ENCODE measurements at regions of chr13 and their contacts with region 1.

Region 1: DNA sequence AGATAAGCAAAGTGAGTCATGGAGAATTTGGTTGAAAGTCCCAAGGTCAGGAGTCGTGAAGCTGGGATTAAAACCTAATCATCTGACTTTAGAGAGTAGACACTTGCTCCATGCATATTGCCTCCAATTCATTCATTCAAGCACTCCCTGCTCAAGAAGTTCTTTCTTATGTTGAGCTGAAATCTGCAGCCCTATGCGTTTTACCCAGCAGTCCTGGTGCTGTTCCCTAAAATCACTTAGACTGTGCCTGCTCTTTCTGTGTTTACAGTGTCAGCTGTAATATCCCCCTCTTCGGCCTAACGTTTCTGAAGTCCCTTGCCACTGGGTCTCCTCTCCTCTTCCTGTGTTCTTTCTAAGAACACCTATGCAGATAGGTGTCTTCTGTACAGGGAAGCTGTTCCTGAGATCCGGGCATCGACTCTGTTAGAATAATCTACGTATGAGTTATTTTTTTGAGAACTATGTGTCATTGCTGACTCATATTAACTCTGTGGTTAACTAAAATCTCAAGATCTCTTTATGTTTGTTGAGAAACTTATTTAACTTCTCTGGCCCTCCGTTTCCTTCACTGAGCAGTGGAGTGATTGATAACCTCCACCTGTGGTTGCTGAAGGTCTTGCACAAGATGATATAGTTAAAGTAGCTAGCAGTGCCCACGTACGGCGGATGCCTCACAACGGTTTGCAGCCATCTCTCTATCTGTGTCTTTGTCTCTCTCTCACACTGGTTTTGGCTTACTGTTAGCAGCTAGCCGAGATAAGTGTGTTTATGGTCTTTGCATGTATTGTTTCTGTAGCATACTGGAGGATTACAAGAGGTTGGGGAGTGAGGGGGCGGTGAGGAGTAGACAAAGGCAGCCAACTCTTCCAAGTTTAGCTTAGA is 4.7 kb downstream of the ALOX5AP start:
- DNase-seq: peak; percentile 80
- H3K4me3 Mint-ChIP-seq: peak overlapping the region; percentile 73
- H3K27ac Mint-ChIP-seq: peak overlapping the region; percentile 88
- H3K4me1 Mint-ChIP-seq: peaks cover 78% of the 10 kb centered on the region
- H3K27me3 Mint-ChIP-seq: peaks cover 2% of the 10 kb centered on the region

Region 2: GRCh38 chr13:29384871-29385270 is 1355.1 kb before region 1 on chr13:
- CTCF ChIA-PET with region 1: no interaction called
- intact Hi-C with region 1: no loop called
- DNase-seq: no peak
- H3K4me3 Mint-ChIP-seq: no peak overlapping the region
- H3K27ac Mint-ChIP-seq: no peak overlapping the region
- H3K4me1 Mint-ChIP-seq: no peaks in the 10 kb centered on the region
- H3K27me3 Mint-ChIP-seq: peaks cover 3% of the 10 kb centered on the region

Region 3: DNA sequence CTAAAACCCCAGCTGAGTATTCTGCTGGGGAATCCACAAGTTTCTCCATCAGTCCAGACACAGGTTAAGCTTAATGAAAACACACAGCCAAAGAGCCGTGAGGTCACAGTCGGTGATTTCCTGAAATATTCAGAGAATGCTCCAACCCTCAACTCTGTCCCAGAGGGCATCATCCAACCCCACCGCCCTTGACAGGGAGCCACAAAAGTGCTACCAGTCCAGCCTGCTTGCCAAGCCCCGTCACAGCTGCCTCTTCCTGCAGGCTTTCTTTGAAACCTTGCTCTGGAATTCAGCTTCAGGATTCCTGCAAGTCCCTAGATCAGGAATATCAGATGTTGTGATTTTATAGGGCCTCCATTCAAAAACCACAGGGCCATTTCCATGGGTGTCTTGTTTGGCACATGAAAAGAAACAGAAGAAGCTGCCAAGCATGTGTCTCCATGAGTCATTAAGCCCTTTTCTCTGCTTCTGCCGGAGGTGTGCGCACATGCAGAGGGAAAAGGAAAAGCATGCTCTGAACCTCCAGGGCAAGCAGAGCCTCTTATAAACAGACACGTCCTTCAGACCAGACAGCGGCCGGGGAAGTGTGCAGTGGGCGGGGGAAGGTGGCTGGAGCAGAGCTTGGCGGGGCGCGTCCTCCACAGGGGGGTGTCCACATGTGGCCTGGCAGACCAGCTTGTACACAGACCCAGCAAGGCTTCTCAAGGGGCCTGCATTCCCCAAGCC is 597.4 kb before region 1 on chr13:
- CTCF ChIA-PET with region 1: no interaction called
- intact Hi-C with region 1: loop called (anchors 2 kb)
- DNase-seq: peak; percentile 63
- H3K4me3 Mint-ChIP-seq: no peak overlapping the region
- H3K27ac Mint-ChIP-seq: peak overlapping the region; percentile 37
- H3K4me1 Mint-ChIP-seq: peaks cover 55% of the 10 kb centered on the region
- H3K27me3 Mint-ChIP-seq: no peaks in the 10 kb centered on the region

Region 4: DNA sequence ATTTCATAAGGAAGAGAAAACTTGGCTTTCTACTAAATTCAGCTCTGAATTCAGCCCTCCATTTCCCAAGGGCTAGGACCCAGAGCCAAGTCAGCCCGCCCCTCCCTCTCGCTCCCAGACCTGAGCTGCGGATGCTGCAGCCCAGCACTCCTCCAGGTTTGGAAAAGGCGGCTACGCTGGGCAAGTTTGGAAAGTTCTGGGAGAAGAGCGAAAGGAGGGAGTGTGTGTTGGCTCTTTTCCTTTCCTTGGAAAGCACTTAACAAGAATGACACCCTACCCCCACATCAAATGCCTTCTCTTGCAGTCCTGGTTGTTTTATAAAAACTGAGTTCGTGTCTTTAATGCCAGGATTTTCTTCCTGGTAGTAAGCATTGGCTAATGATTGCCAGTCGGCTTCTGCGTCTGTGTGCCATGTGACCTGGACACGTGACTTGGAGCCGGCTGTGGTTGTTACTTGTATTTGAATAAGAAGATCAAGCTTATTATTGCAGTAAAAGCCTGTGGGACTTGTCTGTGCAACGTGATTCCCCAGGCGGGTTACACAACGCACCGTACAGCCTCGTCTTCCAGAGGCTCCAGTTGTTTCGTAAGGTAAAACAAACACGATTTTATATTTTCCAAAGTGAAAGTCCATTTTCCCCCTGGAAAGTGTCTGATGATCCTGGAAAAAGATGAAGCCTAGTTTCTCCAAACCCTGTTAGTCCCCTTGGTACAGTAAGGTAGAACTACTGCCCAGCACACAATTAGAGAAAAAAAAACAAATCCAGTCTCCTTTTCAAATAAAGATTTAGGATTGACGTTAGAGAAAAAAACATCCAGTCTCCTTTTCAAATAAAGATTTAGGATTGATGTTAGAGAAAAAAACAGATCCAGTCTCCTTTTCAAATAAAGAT is 344.6 kb before region 1 on chr13:
- CTCF ChIA-PET with region 1: no interaction called
- intact Hi-C with region 1: loop called (anchors 1 kb)
- DNase-seq: peak; percentile 88
- H3K4me3 Mint-ChIP-seq: peak overlapping the region; percentile 85
- H3K27ac Mint-ChIP-seq: peak overlapping the region; percentile 94
- H3K4me1 Mint-ChIP-seq: peaks cover 23% of the 10 kb centered on the region
- H3K27me3 Mint-ChIP-seq: no peaks in the 10 kb centered on the region

Region 5: GRCh38 chr13:30654430-30654829 is 85.6 kb before region 1 on chr13:
- CTCF ChIA-PET with region 1: no interaction called
- intact Hi-C with region 1: loop called (anchors 1 kb)
- DNase-seq: no peak
- H3K4me3 Mint-ChIP-seq: no peak overlapping the region
- H3K27ac Mint-ChIP-seq: peak overlapping the region; percentile 16
- H3K4me1 Mint-ChIP-seq: peaks cover 23% of the 10 kb centered on the region
- H3K27me3 Mint-ChIP-seq: no peaks in the 10 kb centered on the region

Region 6: DNA sequence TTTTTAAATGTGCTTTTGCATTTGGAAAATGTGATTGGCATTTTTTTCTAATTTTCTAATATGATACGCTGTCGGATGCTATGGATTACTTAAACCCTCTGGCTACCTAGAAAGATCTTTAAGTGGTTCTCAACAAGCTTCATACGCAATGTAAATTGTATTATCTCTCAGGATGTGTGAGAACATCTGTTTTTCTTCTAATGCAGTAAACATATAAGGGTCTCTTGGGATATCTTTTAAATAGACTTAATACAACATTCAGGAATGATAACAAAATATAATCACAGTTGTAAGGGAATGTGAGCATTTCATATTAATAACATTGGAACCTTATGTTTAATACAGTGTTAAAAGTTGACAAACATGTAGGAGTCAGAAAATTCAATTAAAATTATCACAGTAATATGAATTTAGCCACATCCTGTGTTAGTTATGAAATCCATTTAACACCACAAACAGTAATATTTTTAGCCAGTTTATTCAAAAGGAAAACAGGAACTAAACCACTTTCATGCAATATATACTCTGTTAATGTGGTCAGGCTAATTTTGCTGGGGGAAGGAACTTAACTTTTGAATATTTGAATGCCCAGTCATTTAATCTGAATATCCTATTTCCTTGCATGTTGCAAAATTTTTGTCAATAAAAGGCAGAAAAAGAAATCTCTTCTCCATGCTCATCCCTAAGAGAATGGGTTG is 19.7 kb before region 1 on chr13:
- CTCF ChIA-PET with region 1: no interaction called
- intact Hi-C with region 1: no loop called
- DNase-seq: no peak
- H3K4me3 Mint-ChIP-seq: no peak overlapping the region
- H3K27ac Mint-ChIP-seq: no peak overlapping the region
- H3K4me1 Mint-ChIP-seq: no peaks in the 10 kb centered on the region
- H3K27me3 Mint-ChIP-seq: no peaks in the 10 kb centered on the region

Region 7: GRCh38 chr13:30774214-30774730 is 34.3 kb after region 1 on chr13:
- CTCF ChIA-PET with region 1: no interaction called
- intact Hi-C with region 1: loop called (anchors 1 kb)
- DNase-seq: peak; percentile 11
- H3K4me3 Mint-ChIP-seq: no peak overlapping the region
- H3K27ac Mint-ChIP-seq: no peak overlapping the region
- H3K4me1 Mint-ChIP-seq: peaks cover 10% of the 10 kb centered on the region
- H3K27me3 Mint-ChIP-seq: no peaks in the 10 kb centered on the region

Region 8: GRCh38 chr13:31161828-31162590 is 422.0 kb after region 1 on chr13 and contains the start of gene HSPH1:
- CTCF ChIA-PET with region 1: no interaction called
- intact Hi-C with region 1: loop called (anchors 2 kb)
- DNase-seq: peak; percentile 99
- H3K4me3 Mint-ChIP-seq: peak within 1 kb of the TSS; percentile 96
- H3K27ac Mint-ChIP-seq: peak within 1 kb of the TSS; percentile 98
- H3K4me1 Mint-ChIP-seq: peaks cover 27% of the 10 kb centered on the region
- H3K27me3 Mint-ChIP-seq: no peaks in the 10 kb centered on the region
- total RNA-seq, gene HSPH1: 122 to 150 TPM